Naive thymus-derived CD4-positive, alpha-beta T cell (primary cell): ENCODE measurements at regions of chr11 and their contacts with region 1.

Region 1: DNA sequence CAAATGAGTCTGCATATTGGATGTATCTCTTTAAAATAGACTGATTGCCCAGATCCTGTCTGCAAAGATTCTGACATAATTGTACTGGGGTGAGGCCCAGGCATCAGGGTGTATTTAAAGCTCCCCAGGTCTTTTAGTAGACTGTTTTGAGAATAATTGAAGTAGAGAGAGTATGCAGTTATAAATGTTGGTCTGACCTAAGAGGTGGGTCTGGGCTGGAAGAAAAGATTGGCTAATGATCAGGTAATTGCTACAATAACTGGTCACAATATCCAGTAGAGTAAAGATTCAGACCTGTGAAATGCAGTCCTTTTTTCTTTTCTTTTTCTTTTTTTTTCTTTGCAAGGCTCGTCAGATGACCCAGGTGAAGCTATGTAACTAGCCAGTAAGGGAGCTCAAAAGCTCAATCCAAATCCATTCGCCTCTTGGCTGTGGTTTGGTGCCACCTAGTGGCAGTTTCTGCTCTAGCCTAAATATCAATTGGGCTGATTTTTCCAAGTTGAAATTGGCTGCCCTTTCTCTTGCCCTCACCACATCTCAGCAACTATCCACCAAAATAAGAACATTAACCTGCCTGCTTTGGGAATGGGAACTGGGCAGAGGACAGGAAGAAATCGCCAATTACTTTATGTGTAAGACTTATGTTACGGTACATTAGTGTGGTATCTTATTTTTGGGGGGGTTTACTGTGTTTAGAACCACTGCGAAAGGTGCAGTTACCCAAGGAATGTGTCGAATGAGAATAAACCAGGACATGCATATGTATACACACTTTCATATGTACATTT is 45.9 kb downstream of the ZNF143 start:
- DNase-seq: peak; percentile 48 to 74 (median 66)
- ATAC-seq: peak; percentile 92
- H3K4me3 ChIP-seq: no peak overlapping the region
- H3K4me3 Mint-ChIP-seq: no peak overlapping the region
- H3K27ac ChIP-seq: no peak overlapping the region
- H3K27ac Mint-ChIP-seq: peak overlapping the region in 2 of 9 donors; percentile 35 to 52
- H3K4me1 ChIP-seq: no peaks in the 10 kb centered on the region
- H3K4me1 Mint-ChIP-seq: peaks cover 0 to 13% (median 6%) of the 10 kb centered on the region in 7 donors
- H3K27me3 ChIP-seq: no peaks in the 10 kb centered on the region
- H3K27me3 Mint-ChIP-seq: no peaks in the 10 kb centered on the region

Region 2: GRCh38 chr11:9015677-9016076 is 491.0 kb before region 1 on chr11:
- CTCF ChIA-PET with region 1: interaction called, 52 read pairs
- POLR2A ChIA-PET with region 1: no interaction called
- intact Hi-C with region 1: loop called in 1 of 2 experiments (anchors 1 kb)
- DNase-seq: peak; percentile 20 to 59 (median 45)
- ATAC-seq: peak; percentile 82
- H3K4me3 ChIP-seq: no peak overlapping the region
- H3K4me3 Mint-ChIP-seq: no peak overlapping the region
- H3K27ac ChIP-seq: no peak overlapping the region
- H3K27ac Mint-ChIP-seq: no peak overlapping the region
- H3K4me1 ChIP-seq: peaks cover 0 to 9% of the 10 kb centered on the region in 2 donors
- H3K4me1 Mint-ChIP-seq: peaks cover 0 to 28% (median 18%) of the 10 kb centered on the region in 7 donors
- H3K27me3 ChIP-seq: no peaks in the 10 kb centered on the region
- H3K27me3 Mint-ChIP-seq: peaks cover 0 to 20% (median 7%) of the 10 kb centered on the region in 5 donors

Region 3: GRCh38 chr11:9170450-9170849 is 336.2 kb before region 1 on chr11:
- CTCF ChIA-PET with region 1: interaction called, 16 read pairs
- POLR2A ChIA-PET with region 1: no interaction called
- intact Hi-C with region 1: loop called (anchors 1 kb)
- DNase-seq: no peak
- ATAC-seq: no peak
- H3K4me3 ChIP-seq: no peak overlapping the region
- H3K4me3 Mint-ChIP-seq: no peak overlapping the region
- H3K27ac ChIP-seq: no peak overlapping the region
- H3K27ac Mint-ChIP-seq: peak overlapping the region in 1 of 9 donors; percentile 27
- H3K4me1 ChIP-seq: no peaks in the 10 kb centered on the region
- H3K4me1 Mint-ChIP-seq: peaks cover 0 to 37% (median 14%) of the 10 kb centered on the region in 7 donors
- H3K27me3 ChIP-seq: no peaks in the 10 kb centered on the region
- H3K27me3 Mint-ChIP-seq: no peaks in the 10 kb centered on the region

Region 4: GRCh38 chr11:9280655-9281301 is 225.9 kb before region 1 on chr11:
- CTCF ChIA-PET with region 1: interaction called, 4 read pairs
- POLR2A ChIA-PET with region 1: no interaction called
- intact Hi-C with region 1: loop called (anchors 1 to 5 kb)
- DNase-seq: peak in 8 of 9 donors; percentile 59 to 80 (median 72)
- ATAC-seq: peak; percentile 95
- H3K4me3 ChIP-seq: peak overlapping the region; percentile 37
- H3K4me3 Mint-ChIP-seq: peak overlapping the region; percentile 35 to 79 (median 77)
- H3K27ac ChIP-seq: peak overlapping the region; percentile 55
- H3K27ac Mint-ChIP-seq: peak overlapping the region; percentile 72 to 94 (median 82)
- H3K4me1 ChIP-seq: peaks cover 11 to 14% of the 10 kb centered on the region in 2 donors
- H3K4me1 Mint-ChIP-seq: peaks cover 11 to 36% (median 17%) of the 10 kb centered on the region in 7 donors
- H3K27me3 ChIP-seq: no peaks in the 10 kb centered on the region
- H3K27me3 Mint-ChIP-seq: no peaks in the 10 kb centered on the region

Region 5: DNA sequence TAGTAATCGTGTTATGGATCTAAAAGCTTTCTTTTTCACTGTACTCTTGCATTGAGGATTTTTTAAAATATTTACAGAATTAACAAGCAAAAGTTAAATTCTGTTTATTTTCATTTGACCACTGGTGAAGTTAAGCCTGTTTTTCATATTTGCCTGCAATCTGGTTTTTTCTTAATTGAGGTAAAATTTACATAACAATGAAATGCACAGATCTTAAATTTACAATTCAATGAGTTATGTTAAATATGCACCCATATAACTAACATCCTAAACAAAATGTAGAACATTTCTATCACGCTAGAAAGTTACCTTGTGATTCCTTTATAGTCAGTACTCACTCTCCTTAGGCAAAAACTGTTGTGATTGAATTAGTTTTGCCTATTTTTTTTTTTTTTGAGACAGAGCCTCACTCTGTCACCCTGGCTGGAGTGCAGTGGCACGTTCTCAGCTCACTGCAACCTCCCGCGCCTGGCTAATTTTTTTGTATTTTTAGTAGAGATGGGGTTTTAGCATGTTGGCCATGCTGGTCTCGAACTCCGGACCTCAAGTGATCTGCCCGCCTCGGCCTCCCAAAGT is 12.2 kb after region 1 on chr11:
- CTCF ChIA-PET with region 1: interaction called, 15 read pairs
- POLR2A ChIA-PET with region 1: no interaction called
- intact Hi-C with region 1: no loop called
- DNase-seq: no peak
- ATAC-seq: no peak
- H3K4me3 ChIP-seq: no peak overlapping the region
- H3K4me3 Mint-ChIP-seq: no peak overlapping the region
- H3K27ac ChIP-seq: no peak overlapping the region
- H3K27ac Mint-ChIP-seq: no peak overlapping the region
- H3K4me1 ChIP-seq: no peaks in the 10 kb centered on the region
- H3K4me1 Mint-ChIP-seq: peaks cover 0 to 2% (median 0%) of the 10 kb centered on the region in 7 donors
- H3K27me3 ChIP-seq: no peaks in the 10 kb centered on the region
- H3K27me3 Mint-ChIP-seq: no peaks in the 10 kb centered on the region